ENCODE measurements at regions of chr6 and their contacts with region 1.

Region 1: DNA sequence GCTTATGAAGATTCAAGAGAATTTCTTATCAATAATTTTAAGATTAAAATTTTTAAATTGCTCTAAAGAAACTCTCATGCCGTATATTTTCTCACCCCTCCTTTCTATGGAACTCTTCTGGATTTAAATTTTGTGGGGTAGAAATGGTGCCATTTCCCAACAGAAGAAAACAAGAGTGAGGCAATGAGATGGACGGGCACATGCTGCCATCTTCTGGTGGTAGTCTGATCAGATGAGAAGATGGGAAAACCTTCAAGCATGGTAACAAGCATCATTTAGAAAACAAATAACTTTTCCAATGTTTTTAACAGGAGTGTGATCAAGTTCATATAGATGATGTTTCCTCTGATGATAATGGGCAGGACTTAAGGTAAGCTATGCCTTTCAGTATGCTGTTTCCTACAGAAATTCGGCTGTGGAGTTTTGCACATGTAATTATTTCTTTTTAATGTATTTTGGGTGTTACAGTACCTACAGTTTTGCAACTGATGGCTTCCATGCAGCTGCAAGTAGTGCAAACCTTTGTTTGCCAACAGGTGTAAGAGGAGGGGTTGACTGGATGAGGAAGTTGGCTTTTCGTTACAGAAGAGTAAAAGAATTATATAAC is 271.4 kb downstream of the EYA4 start:
- DNase-seq: peak in 2 of 9 donors; percentile 4 to 13
- ATAC-seq: no peak
- H3K4me3 ChIP-seq: no peak overlapping the region
- H3K4me3 Mint-ChIP-seq: no peak overlapping the region
- H3K27ac ChIP-seq: no peak overlapping the region
- H3K27ac Mint-ChIP-seq: no peak overlapping the region
- H3K4me1 ChIP-seq: no peaks in the 10 kb centered on the region
- H3K4me1 Mint-ChIP-seq: no peaks in the 10 kb centered on the region
- H3K27me3 ChIP-seq: no peaks in the 10 kb centered on the region
- H3K27me3 Mint-ChIP-seq: peaks cover 3 to 28% (median 15%) of the 10 kb centered on the region in 5 donors

Region 2: DNA sequence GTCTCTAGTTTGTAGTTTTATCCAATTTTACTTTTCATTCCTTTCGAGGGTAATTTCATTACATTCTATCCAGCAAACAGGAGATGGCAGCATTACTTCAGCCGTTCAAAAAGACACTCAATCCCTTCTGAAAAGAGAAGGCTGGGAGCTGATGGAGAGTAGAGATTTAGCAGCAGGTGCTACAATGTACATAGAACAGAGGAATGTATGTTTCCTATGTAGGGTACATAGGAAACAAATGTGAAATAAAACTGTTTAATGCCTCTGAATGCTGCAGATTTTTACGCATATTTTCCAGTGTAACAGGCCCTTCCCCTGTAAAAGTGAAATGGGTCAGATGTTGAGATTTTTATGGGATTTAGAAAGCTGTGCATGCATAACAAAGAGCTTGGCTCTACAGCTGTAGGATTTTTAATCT is 682.2 kb before region 1 on chr6:
- CTCF ChIA-PET with region 1: no interaction called
- POLR2A ChIA-PET with region 1: no interaction called
- intact Hi-C with region 1: loop called in 1 of 2 experiments (anchors 2 kb)
- DNase-seq: no peak
- ATAC-seq: no peak
- H3K4me3 ChIP-seq: no peak overlapping the region
- H3K4me3 Mint-ChIP-seq: no peak overlapping the region
- H3K27ac ChIP-seq: no peak overlapping the region
- H3K27ac Mint-ChIP-seq: no peak overlapping the region
- H3K4me1 ChIP-seq: no peaks in the 10 kb centered on the region
- H3K4me1 Mint-ChIP-seq: no peaks in the 10 kb centered on the region
- H3K27me3 ChIP-seq: no peaks in the 10 kb centered on the region
- H3K27me3 Mint-ChIP-seq: peaks cover 0 to 6% (median 0%) of the 10 kb centered on the region in 5 donors

Region 3: DNA sequence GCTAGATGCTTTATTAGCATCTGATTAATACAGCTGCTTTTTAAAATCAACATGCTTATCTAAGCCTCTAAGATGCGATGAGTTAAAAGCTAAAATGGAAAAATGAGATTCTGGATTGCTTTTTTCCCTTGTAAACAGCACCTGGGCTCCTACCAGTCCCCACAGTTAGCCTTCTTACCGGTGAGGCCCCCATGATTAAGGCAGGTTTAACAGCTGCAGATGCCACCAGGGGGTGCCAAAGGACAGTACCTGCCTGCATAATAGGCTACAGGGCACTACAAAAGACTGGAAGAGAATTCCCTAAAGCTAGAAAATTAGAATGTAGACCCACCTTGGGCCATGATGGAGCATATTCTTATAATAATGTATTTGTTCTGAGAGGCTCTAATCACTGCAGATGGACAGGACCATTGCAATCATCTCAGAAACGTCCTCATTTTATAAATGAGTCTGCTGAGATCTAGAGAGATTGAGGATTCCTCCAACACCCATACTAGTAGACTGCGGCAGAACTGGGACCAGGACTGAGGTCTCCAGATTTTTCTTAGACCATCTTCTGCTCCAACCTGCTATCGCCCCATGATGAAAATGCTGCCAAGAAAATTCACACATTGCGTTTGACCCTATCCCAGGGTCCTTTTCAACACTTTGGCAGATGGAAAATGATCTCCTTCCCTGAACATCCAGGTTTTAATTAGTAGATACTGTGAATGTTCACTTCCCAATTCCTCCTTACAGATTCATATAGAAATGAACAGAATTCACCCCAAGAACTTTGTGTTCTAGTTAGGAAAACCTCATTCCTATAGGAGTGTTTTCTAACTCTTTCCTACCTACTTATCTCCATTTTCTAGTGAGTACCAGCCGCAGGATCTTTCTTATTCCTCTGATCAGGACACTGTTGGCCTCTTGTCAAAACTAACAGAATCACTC is 549.3 kb before region 1 on chr6:
- CTCF ChIA-PET with region 1: no interaction called
- POLR2A ChIA-PET with region 1: no interaction called
- intact Hi-C with region 1: loop called in 1 of 2 experiments (anchors 1 kb)
- DNase-seq: peak in 7 of 9 donors; percentile 6 to 64 (median 20)
- ATAC-seq: peak; percentile 65
- H3K4me3 ChIP-seq: no peak overlapping the region
- H3K4me3 Mint-ChIP-seq: no peak overlapping the region
- H3K27ac ChIP-seq: no peak overlapping the region
- H3K27ac Mint-ChIP-seq: no peak overlapping the region
- H3K4me1 ChIP-seq: no peaks in the 10 kb centered on the region
- H3K4me1 Mint-ChIP-seq: peaks cover 0 to 29% (median 0%) of the 10 kb centered on the region in 7 donors
- H3K27me3 ChIP-seq: no peaks in the 10 kb centered on the region
- H3K27me3 Mint-ChIP-seq: peaks cover 20 to 49% (median 36%) of the 10 kb centered on the region in 5 donors